Spleen (tissue), 13 donors: ENCODE measurements at regions of chrX and their contacts with region 1.

Region 1: DNA sequence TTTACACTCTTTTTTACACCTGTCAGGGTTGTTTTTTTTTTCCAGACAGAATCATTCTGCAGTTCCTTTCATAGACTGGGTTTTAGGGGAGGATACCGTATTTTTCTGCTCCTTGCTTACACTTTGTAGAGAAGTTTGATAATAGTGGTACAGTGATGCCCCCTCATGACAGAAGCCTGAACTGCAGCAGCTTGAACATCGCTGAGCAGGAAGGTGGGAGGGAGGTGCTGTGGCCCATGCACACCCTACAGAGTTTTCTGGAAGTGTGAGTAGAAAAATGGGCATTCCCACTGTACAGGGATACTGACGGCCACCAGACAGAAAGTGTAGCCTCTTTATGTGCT is 54.5 kb downstream of the RAB40A start:
- DNase-seq: no peak
- H3K4me3 ChIP-seq: peak overlapping the region in 7 of 8 donors; percentile 8 to 65 (median 32)
- H3K27ac ChIP-seq: peak overlapping the region in 1 of 8 donors; percentile 30
- H3K4me1 ChIP-seq: peaks cover 0 to 3% (median 0%) of the 10 kb centered on the region in 6 donors
- H3K27me3 ChIP-seq: no peaks in the 10 kb centered on the region
- CTCF ChIP-seq: peak; percentile 55 to 79 (median 69)
- POLR2A ChIP-seq: no peak

Region 2: DNA sequence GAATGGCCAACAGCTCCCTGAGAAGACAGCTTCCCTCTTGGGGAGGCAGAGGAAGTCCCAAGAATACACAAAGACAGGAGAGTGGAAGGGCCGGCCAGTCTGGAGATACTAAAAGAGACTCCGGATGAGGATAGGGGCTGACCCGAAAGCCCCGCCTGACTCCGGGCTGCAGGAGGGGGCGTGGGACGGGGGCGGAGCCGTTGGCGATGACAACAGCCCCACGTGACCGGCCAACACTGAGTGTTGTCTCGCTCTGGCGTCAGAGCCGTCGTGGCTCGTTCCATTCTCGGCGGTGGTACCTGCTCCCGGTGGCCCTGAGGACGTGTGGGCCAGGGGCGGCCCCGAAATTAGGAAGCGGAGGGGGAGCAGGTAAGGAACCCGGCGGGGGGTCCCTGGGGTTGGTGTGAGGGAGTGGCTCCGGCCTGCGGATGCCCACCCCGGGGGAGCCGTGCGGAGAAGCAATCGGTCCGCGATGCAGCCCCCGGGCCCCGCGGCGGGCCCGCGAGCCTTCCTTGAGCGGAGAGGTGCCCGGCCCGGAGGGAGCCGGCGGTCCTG is 249.8 kb before region 1 on chrX and contains the start of gene BEX4:
- intact Hi-C with region 1: loop called (anchors 5 kb)
- DNase-seq: peak; percentile 94
- H3K4me3 ChIP-seq: peak within 1 kb of the TSS; percentile 45 to 84 (median 56)
- H3K27ac ChIP-seq: peak within 1 kb of the TSS; percentile 72 to 92 (median 90)
- H3K4me1 ChIP-seq: peaks cover 0 to 12% (median 2%) of the 10 kb centered on the region in 6 donors
- H3K27me3 ChIP-seq: peaks cover 0 to 15% (median 0%) of the 10 kb centered on the region in 7 donors
- CTCF ChIP-seq: no peak
- POLR2A ChIP-seq: peak in 2 of 3 donors; percentile 69 to 84
- total RNA-seq, gene BEX4: 26.0 to 58.6 (median 46.6) TPM

Region 3: DNA sequence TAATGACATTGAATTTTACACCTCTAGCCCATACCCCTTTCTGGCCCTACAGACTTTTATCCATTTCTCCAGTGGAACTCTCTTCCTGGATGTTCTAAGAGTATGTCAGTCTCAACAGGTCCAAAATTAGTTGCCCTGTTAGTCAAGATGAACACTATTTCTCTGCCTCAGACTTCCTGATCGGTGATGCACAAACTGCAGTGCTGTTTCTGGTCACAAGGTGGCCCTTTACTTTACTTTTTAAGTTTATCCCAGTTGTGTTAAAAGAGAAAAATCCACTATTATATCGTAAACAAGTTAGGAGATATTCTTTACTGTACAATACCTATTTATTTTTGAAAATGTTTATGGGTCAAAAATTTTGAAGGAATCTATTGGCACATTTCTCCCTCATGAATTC is 121.6 kb before region 1 on chrX:
- intact Hi-C with region 1: loop called (anchors 10 kb)
- DNase-seq: no peak
- H3K4me3 ChIP-seq: no peak overlapping the region
- H3K27ac ChIP-seq: no peak overlapping the region
- H3K4me1 ChIP-seq: no peaks in the 10 kb centered on the region
- H3K27me3 ChIP-seq: peaks cover 0 to 16% (median 0%) of the 10 kb centered on the region in 7 donors
- CTCF ChIP-seq: peak; percentile 22 to 71 (median 58)
- POLR2A ChIP-seq: no peak